ENCODE measurements at regions of chr5 and their contacts with region 1.

Region 1: GRCh38 chr5:78294248-78295034 is at the start of gene AP3B1:
- DNase-seq: peak; percentile 98 to 100 (median 99)
- ATAC-seq: peak; percentile 97
- H3K4me3 ChIP-seq: peak within 1 kb of the TSS; percentile 76 to 95
- H3K27ac ChIP-seq: peak within 1 kb of the TSS; percentile 86 to 95
- H3K4me1 ChIP-seq: peaks cover 7 to 41% of the 10 kb centered on the region in 2 donors
- H3K27me3 ChIP-seq: no peaks in the 10 kb centered on the region
- CTCF ChIP-seq: no peak
- polyA plus RNA-seq, gene AP3B1: 46.6 to 61.2 (median 51.0) TPM

Region 2: GRCh38 chr5:78056901-78057513 is 237.4 kb before region 1 on chr5:
- intact Hi-C with region 1: no loop called
- DNase-seq: no peak
- ATAC-seq: no peak
- H3K4me3 ChIP-seq: no peak overlapping the region
- H3K27ac ChIP-seq: peak overlapping the region in 1 of 2 donors; percentile 46
- H3K4me1 ChIP-seq: no peaks in the 10 kb centered on the region
- H3K27me3 ChIP-seq: no peaks in the 10 kb centered on the region
- CTCF ChIP-seq: no peak

Region 3: GRCh38 chr5:78359831-78360673 is 65.6 kb after region 1 on chr5 and contains the start of gene SCAMP1:
- intact Hi-C with region 1: loop called in 1 of 2 experiments (anchors 5 kb)
- DNase-seq: peak; percentile 93 to 98 (median 95)
- ATAC-seq: peak; percentile 97
- H3K4me3 ChIP-seq: peak within 1 kb of the TSS; percentile 89 to 95
- H3K27ac ChIP-seq: peak within 1 kb of the TSS; percentile 90 to 94
- H3K4me1 ChIP-seq: peaks cover 11 to 27% of the 10 kb centered on the region in 2 donors
- H3K27me3 ChIP-seq: no peaks in the 10 kb centered on the region
- CTCF ChIP-seq: peak; percentile 37 to 63
- polyA plus RNA-seq, gene SCAMP1: 40.8 to 58.2 (median 50.4) TPM